GM12878 (cell line): ENCODE measurements at regions of chr15 and their contacts with region 1.

Region 1: DNA sequence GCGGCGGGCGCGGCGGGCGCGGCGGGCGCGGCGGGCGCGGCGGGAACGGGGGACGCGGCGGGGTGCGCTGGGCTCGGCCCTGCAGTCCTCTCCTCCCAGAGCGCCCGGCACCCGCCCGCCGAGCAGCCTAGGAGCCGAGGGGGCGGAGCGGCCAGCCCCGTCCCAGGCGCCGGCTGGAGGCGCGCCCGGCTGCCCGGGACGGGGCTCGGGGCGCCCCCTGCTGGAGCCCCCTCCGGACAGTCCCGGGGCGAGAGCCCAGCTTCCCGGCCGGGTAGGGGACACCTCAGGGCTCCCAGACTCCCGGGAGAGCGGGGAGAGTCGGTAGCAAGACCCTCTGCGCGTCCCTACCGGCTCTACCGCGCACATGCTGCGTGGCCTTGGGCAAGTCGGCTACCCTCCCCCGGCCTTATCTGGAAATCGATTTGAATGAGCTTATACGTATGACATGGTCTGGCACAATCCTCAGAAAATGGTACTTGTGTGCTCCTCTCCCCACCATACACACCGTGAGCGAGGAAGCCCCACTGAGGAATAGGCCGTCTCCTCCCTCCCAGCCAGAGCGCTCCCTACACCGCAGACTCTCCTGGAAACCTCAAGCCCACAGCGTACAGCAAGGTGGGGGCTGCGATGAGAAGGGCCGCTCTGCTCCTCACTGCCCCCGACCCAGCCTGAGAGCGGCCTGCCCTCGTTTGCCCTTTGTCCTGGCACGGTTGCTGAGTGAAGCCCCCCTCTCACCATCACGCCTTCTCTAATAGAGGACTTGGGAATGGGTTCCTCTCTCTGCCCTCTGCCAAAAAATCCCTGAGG is at the start of gene DAPK2:
- DNase-seq: no peak
- ATAC-seq: peak; percentile 79
- H3K4me3 ChIP-seq: peak within 1 kb of the TSS; percentile 69
- H3K27ac ChIP-seq: peak within 1 kb of the TSS; percentile 55
- H3K4me1 ChIP-seq: peaks cover 36% of the 10 kb centered on the region
- H3K27me3 ChIP-seq: no peaks in the 10 kb centered on the region
- CTCF ChIP-seq: peak; percentile 71 to 81 (median 74)
- EP300 ChIP-seq: no peak
- POLR2A ChIP-seq: no peak; the same call in 1 of the 2 replicates
- RAD21 ChIP-seq: peak; percentile 67
- polyA plus RNA-seq, gene DAPK2: 0.69 to 0.75 TPM

Region 2: GRCh38 chr15:63826528-63826927 is 220.0 kb before region 1 on chr15:
- CTCF ChIA-PET with region 1: interaction called, 14 read pairs
- POLR2A ChIA-PET with region 1: no interaction called
- RAD21 ChIA-PET with region 1: interaction called, 6 read pairs
- SMC1A ChIA-PET with region 1: interaction called, 8 read pairs
- in situ Hi-C with region 1: no loop called
- intact Hi-C with region 1: loop called (anchors 2 kb)
- DNase-seq: no peak
- ATAC-seq: no peak
- H3K4me3 ChIP-seq: no peak overlapping the region
- H3K27ac ChIP-seq: no peak overlapping the region
- H3K4me1 ChIP-seq: no peaks in the 10 kb centered on the region
- H3K27me3 ChIP-seq: no peaks in the 10 kb centered on the region
- CTCF ChIP-seq: peak; percentile 21 to 31 (median 27); a peak in 3 of 6 replicates
- EP300 ChIP-seq: no peak
- POLR2A ChIP-seq: no peak
- RAD21 ChIP-seq: peak; percentile 44

Region 3: GRCh38 chr15:63891079-63891767 is 155.3 kb before region 1 on chr15:
- CTCF ChIA-PET with region 1: interaction called, 65 read pairs
- POLR2A ChIA-PET with region 1: interaction called, 4 read pairs
- RAD21 ChIA-PET with region 1: interaction called, 15 read pairs
- SMC1A ChIA-PET with region 1: interaction called, 33 read pairs
- in situ Hi-C with region 1: no loop called
- intact Hi-C with region 1: loop called (anchors 2 kb)
- DNase-seq: peak; percentile 72
- ATAC-seq: peak; percentile 67
- H3K4me3 ChIP-seq: no peak overlapping the region
- H3K27ac ChIP-seq: peak overlapping the region; percentile 79
- H3K4me1 ChIP-seq: peaks cover 62% of the 10 kb centered on the region
- H3K27me3 ChIP-seq: no peaks in the 10 kb centered on the region
- CTCF ChIP-seq: peak; percentile 80 to 88 (median 86)
- EP300 ChIP-seq: no peak
- POLR2A ChIP-seq: no peak
- RAD21 ChIP-seq: peak; percentile 88

Region 4: DNA sequence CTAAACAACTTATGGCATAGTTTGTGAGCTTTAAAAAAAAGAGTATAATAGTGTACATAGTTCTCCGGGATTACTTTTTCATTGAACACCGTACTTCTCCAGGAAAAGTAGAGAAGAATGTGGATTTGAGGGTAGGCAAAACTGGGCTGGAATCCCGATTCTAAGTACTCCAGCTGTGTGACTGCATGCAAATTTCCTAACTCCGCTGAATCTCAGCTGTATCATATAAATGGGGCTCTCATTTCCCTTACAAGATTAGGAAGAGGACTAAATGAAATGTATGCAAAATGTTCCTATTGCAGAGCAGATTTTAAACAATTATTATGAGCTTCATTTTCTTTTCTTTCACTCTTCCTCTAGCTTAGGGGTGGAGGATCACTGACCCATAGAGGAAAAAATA is 142.5 kb before region 1 on chr15:
- CTCF ChIA-PET with region 1: interaction called, 11 read pairs
- POLR2A ChIA-PET with region 1: no interaction called
- RAD21 ChIA-PET with region 1: interaction called, 3 read pairs
- SMC1A ChIA-PET with region 1: interaction called, 5 read pairs
- in situ Hi-C with region 1: no loop called
- intact Hi-C with region 1: no loop called
- DNase-seq: no peak
- ATAC-seq: no peak
- H3K4me3 ChIP-seq: no peak overlapping the region
- H3K27ac ChIP-seq: no peak overlapping the region
- H3K4me1 ChIP-seq: peaks cover 28% of the 10 kb centered on the region
- H3K27me3 ChIP-seq: no peaks in the 10 kb centered on the region
- CTCF ChIP-seq: no peak
- EP300 ChIP-seq: no peak
- POLR2A ChIP-seq: no peak
- RAD21 ChIP-seq: no peak

Region 5: DNA sequence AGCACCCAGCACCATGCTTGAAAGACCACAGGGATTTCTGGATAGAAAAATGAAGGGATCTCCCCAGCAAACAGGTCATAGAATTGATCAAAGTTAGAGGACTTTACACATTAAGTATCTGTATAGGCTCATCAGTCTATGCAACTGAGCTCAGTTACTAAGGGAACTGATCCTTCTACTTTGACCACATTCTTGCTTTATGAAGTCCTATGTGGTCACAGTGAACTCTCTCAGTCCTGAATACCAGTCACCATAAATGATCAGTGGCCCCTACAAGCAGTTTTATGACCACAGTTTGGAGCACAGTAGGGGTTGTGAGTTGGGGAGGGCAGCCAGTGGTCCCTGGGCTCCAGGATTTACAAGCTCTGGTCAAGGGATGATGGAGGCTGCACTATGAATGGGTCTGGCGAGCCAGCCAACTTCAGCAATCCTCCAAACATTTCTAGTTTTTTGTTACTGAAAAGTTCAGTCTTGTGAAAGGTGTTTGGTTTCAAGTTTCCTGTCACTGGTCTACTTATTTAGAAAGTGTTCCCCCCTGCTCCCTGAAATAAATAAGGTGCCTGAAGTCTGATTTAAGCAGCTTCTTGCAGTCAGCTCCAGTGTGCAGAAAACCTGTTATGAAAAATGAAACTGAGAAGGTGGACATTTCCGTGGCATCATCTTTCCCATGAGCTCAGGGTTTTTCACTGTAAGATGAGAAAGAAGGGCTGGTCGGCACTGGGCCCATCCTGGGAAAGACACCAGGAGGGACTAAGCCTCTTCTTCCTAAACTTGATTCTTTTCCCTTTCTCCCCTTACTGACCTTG is 75.7 kb before region 1 on chr15:
- CTCF ChIA-PET with region 1: interaction called, 13 read pairs
- POLR2A ChIA-PET with region 1: no interaction called
- RAD21 ChIA-PET with region 1: interaction called, 3 read pairs
- SMC1A ChIA-PET with region 1: interaction called, 6 read pairs
- in situ Hi-C with region 1: no loop called
- intact Hi-C with region 1: no loop called
- DNase-seq: peak; percentile 85
- ATAC-seq: peak; percentile 96
- H3K4me3 ChIP-seq: peak overlapping the region; percentile 24
- H3K27ac ChIP-seq: peak overlapping the region; percentile 95
- H3K4me1 ChIP-seq: peaks cover 48% of the 10 kb centered on the region
- H3K27me3 ChIP-seq: no peaks in the 10 kb centered on the region
- CTCF ChIP-seq: no peak
- EP300 ChIP-seq: peak; percentile 46 to 90; a peak in 3 of 4 replicates
- POLR2A ChIP-seq: no peak
- RAD21 ChIP-seq: no peak

Region 6: DNA sequence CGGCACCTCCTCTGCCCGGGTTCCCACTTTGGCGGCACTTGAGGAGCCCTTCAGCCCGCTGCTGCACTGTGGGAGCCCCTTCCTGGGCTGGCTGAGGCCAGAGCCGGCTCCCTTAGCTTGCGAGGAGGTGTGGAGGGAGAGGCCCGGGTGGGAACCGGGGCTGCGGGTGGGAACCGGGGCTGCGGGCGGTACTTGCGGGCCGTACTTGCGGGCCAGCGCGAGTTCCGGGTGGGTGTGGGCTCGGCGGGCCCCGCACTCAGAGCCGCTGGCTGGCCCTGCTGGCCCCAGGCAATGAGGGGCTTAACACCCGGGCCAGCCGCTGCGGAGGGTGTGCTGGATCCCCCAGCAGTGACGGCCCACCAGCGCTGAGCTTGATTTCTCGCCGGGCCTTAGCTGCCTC is 14.2 kb after region 1 on chr15:
- CTCF ChIA-PET with region 1: interaction called, 62 read pairs
- POLR2A ChIA-PET with region 1: interaction called, 3 read pairs
- RAD21 ChIA-PET with region 1: interaction called, 25 read pairs
- SMC1A ChIA-PET with region 1: interaction called, 79 read pairs
- in situ Hi-C with region 1: no loop called
- intact Hi-C with region 1: no loop called
- DNase-seq: no peak
- ATAC-seq: no peak
- H3K4me3 ChIP-seq: no peak overlapping the region
- H3K27ac ChIP-seq: no peak overlapping the region
- H3K4me1 ChIP-seq: no peaks in the 10 kb centered on the region
- H3K27me3 ChIP-seq: no peaks in the 10 kb centered on the region
- CTCF ChIP-seq: no peak
- EP300 ChIP-seq: no peak
- POLR2A ChIP-seq: no peak
- RAD21 ChIP-seq: no peak

Region 7: GRCh38 chr15:64093627-64094417 is 47.3 kb after region 1 on chr15 and contains the start of gene CIAO2A:
- CTCF ChIA-PET with region 1: interaction called, 17 read pairs
- POLR2A ChIA-PET with region 1: interaction called, 7 read pairs
- RAD21 ChIA-PET with region 1: interaction called, 13 read pairs
- SMC1A ChIA-PET with region 1: interaction called, 4 read pairs
- in situ Hi-C with region 1: no loop called
- intact Hi-C with region 1: no loop called
- DNase-seq: peak; percentile 99
- ATAC-seq: peak; percentile 74
- H3K4me3 ChIP-seq: peak within 1 kb of the TSS; percentile 96
- H3K27ac ChIP-seq: peak within 1 kb of the TSS; percentile 94
- H3K4me1 ChIP-seq: peaks cover 32% of the 10 kb centered on the region
- H3K27me3 ChIP-seq: no peaks in the 10 kb centered on the region
- CTCF ChIP-seq: no peak
- EP300 ChIP-seq: no peak
- POLR2A ChIP-seq: peak; percentile 66; the same call in 1 of the 2 replicates
- RAD21 ChIP-seq: no peak
- polyA plus RNA-seq, gene CIAO2A: 264 to 303 TPM

Region 8: DNA sequence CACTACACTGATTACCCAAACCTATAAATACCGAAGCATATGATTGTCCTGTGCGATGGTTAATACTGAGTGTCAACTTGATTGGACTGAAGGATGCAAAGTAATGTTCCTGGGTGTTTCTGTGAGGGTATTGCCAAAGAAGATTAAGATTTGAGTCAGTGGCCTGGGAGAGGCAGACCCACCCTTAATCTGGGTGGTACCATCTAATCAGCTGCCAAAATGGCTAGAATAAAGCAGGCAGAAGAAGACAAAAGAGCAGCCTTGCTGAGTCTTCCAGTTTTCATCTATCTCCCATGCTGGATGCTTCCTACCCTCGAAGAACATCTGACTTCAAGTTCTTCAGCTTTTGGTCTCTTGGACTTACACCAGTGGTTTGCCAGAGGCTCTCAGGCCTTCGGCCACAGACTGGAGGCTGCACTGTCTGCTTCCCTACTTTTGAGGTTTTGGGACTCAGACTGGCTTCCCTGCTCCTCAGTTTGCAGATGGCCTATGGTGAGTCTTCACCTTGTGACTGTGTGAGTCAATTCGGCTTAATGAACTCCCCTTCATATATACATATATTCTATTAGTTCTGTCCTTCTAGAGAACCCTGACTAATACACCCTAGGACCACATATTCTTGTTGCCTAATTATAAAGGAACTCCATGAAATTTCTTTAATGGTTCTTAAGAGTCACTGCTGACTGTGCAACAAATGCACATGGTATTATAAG is 277.8 kb after region 1 on chr15:
- CTCF ChIA-PET with region 1: no interaction called
- POLR2A ChIA-PET with region 1: no interaction called
- RAD21 ChIA-PET with region 1: no interaction called
- SMC1A ChIA-PET with region 1: no interaction called
- in situ Hi-C with region 1: no loop called
- intact Hi-C with region 1: no loop called
- DNase-seq: no peak
- ATAC-seq: no peak
- H3K4me3 ChIP-seq: no peak overlapping the region
- H3K27ac ChIP-seq: no peak overlapping the region
- H3K4me1 ChIP-seq: no peaks in the 10 kb centered on the region
- H3K27me3 ChIP-seq: no peaks in the 10 kb centered on the region
- CTCF ChIP-seq: no peak
- EP300 ChIP-seq: no peak
- POLR2A ChIP-seq: no peak
- RAD21 ChIP-seq: no peak